ENCODE measurements at regions of chr12 and their contacts with region 1.

Region 1: DNA sequence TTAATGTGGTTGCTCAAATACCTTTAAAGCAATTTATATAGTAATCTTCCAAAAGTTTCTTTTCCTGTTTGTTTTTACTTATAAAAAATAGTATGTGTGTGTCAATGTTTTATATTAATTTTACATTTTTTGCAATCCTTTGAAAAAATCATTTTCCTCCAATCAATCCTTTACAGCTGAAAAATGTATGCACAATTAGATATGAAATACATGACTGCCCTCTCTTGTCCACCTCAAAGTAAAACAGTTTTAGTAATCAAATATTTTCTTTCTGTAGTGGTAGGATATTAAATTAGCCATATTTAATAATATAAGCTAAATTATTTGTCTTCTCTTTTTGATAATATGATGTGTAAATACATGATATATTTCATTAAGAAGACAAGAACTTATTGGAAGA is 269.9 kb downstream of the ADAMTS20 start:
- DNase-seq: peak; percentile 70

Region 2: GRCh38 chr12:42469355-42470175 is 812.5 kb before region 1 on chr12:
- in situ Hi-C with region 1: loop called (anchors 25 kb)
- DNase-seq: no peak

Region 3: GRCh38 chr12:42790761-42791151 is 491.4 kb before region 1 on chr12:
- in situ Hi-C with region 1: loop called (anchors 25 kb)
- DNase-seq: peak; percentile 99

Region 4: DNA sequence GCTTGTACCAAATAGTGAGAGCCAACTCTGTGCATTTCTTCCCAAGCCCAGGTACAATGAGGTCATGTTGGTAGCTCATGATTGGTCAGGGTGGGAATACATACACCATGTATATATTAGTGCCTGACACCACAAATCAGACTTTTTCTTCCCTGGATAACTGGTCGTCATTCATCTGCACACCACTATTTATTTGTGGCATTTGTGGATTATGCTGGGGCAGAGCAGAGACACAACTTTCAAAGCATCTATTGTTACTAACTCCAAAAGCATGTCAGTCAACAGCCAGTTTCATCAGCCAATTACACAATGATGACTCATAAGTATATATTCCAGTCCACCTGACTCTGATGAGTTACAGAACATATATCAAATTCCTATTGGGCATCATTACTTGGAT is 88.2 kb after region 1 on chr12:
- in situ Hi-C with region 1: no loop called
- DNase-seq: peak; percentile 35

Region 5: GRCh38 chr12:43945983-43946382 is 663.9 kb after region 1 on chr12:
- in situ Hi-C with region 1: no loop called
- DNase-seq: no peak